ENCODE measurements at regions of chr3 and their contacts with region 1.

Region 1: DNA sequence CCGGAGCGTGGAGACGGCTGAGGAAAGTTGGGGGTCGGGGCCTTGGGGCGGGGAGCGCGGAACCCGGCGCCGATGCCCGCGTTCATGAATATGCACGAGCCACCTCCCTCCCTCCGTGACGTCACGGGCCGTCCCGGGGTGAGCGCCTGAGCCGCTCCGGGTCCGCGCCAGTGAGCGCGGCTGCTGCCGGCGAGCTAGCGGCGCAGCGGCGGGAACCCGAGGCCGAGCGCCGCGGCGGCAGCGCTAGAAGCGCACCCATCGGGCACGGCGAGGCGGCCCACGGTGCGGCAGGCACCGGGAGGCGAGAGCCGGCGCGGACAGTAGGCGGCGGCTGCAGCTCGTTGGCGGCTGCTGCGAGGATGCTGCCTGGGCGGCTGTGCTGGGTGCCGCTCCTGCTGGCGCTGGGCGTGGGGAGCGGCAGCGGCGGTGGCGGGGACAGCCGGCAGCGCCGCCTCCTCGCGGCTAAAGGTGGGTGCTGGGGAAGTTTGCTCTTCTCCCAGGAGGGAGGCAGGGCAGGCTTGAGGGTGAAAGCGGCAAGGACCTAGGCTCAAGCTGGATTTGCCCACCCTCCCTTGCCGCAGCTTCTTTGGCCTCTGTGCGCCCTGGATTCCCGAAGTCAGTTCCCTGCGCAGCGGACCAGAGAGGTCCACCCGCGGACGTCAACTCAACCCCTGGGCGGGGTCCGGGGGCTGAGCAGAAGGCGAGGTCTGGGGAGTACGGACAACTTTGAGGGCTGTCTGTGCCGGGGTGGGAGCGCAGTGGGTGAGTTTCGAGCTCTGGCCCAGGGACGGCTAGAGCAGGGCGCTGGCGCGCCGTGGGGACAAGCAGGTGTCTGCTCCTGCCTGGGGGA is at the start of gene CLSTN2:
- DNase-seq: no peak
- H3K4me3 Mint-ChIP-seq: no peak within 1 kb of the TSS
- H3K27ac Mint-ChIP-seq: no peak within 1 kb of the TSS
- H3K4me1 Mint-ChIP-seq: no peaks in the 10 kb centered on the region
- H3K27me3 Mint-ChIP-seq: peaks cover 30% of the 10 kb centered on the region
- CTCF ChIP-seq: no peak
- total RNA-seq, gene CLSTN2: not detected in 2 replicates

Region 2: GRCh38 chr3:139588450-139588849 is 346.8 kb before region 1 on chr3:
- CTCF ChIA-PET with region 1: no interaction called
- POLR2A ChIA-PET with region 1: interaction called, 3 read pairs
- intact Hi-C with region 1: loop called (anchors 10 kb)
- DNase-seq: peak; percentile 67
- H3K4me3 Mint-ChIP-seq: no peak overlapping the region
- H3K27ac Mint-ChIP-seq: no peak overlapping the region
- H3K4me1 Mint-ChIP-seq: no peaks in the 10 kb centered on the region
- H3K27me3 Mint-ChIP-seq: no peaks in the 10 kb centered on the region
- CTCF ChIP-seq: no peak

Region 3: DNA sequence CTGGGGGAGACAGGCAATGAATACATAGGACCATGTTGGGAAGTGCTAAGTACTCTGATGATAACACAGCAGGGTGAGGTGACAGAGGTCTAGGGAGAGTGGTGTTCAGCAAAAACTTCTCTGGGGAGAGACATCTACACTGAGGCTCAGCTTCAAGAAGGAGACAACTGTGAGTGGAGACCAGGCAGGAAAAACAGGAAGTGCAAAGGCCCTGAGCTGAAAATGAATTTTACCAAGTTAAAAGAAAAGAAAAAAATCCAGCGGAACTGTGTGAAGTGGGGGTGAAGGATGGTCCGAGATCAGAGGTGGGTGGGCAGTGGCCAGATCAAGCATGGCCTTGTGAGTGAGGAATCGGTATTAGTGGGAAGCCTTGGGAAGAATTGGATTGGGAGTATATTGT is 110.4 kb before region 1 on chr3:
- CTCF ChIA-PET with region 1: no interaction called
- POLR2A ChIA-PET with region 1: no interaction called
- intact Hi-C with region 1: no loop called
- DNase-seq: no peak
- H3K4me3 Mint-ChIP-seq: no peak overlapping the region
- H3K27ac Mint-ChIP-seq: no peak overlapping the region
- H3K4me1 Mint-ChIP-seq: no peaks in the 10 kb centered on the region
- H3K27me3 Mint-ChIP-seq: no peaks in the 10 kb centered on the region
- CTCF ChIP-seq: no peak

Region 4: GRCh38 chr3:140023616-140024530 is 88.6 kb after region 1 on chr3:
- CTCF ChIA-PET with region 1: no interaction called
- POLR2A ChIA-PET with region 1: no interaction called
- intact Hi-C with region 1: no loop called
- DNase-seq: no peak
- H3K4me3 Mint-ChIP-seq: no peak overlapping the region
- H3K27ac Mint-ChIP-seq: no peak overlapping the region
- H3K4me1 Mint-ChIP-seq: no peaks in the 10 kb centered on the region
- H3K27me3 Mint-ChIP-seq: no peaks in the 10 kb centered on the region
- CTCF ChIP-seq: no peak

Region 5: GRCh38 chr3:140073278-140074045 is 138.2 kb after region 1 on chr3:
- CTCF ChIA-PET with region 1: no interaction called
- POLR2A ChIA-PET with region 1: no interaction called
- intact Hi-C with region 1: no loop called
- DNase-seq: no peak
- H3K4me3 Mint-ChIP-seq: no peak overlapping the region
- H3K27ac Mint-ChIP-seq: no peak overlapping the region
- H3K4me1 Mint-ChIP-seq: no peaks in the 10 kb centered on the region
- H3K27me3 Mint-ChIP-seq: no peaks in the 10 kb centered on the region
- CTCF ChIP-seq: no peak

Measured in MCF 10A (cell line).